ENCODE measurements at regions of chr21 and their contacts with region 1.

Region 1: DNA sequence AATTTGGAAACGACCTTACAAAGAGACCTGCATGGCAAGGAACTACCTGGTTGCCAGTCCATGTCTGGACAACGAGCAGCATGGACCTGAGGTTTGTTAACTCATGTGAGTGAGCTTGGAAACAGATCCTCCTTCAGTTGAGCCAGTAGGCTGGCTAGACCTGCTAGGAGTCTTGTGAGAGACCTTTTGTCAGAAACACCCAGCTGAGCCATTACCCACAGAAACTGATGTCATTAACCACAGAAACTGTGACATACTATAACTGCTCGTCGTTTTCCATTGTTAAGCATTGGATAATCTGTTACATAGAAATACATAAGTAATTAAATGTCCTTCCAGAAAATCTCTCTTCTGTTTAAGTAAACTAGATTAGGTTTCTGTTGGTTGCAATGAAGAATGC is 211.1 kb upstream of the C21orf91 start:
- DNase-seq: no peak
- ATAC-seq: no peak
- H3K4me3 ChIP-seq: no peak overlapping the region
- H3K4me3 Mint-ChIP-seq: no peak overlapping the region
- H3K27ac ChIP-seq: no peak overlapping the region
- H3K27ac Mint-ChIP-seq: no peak overlapping the region
- H3K4me1 ChIP-seq: no peaks in the 10 kb centered on the region
- H3K4me1 Mint-ChIP-seq: no peaks in the 10 kb centered on the region
- H3K27me3 ChIP-seq: no peaks in the 10 kb centered on the region
- H3K27me3 Mint-ChIP-seq: no peaks in the 10 kb centered on the region
- CTCF ChIP-seq: no peak

Region 2: GRCh38 chr21:17981060-17981740 is 49.0 kb before region 1 on chr21:
- CTCF ChIA-PET with region 1: no interaction called
- POLR2A ChIA-PET with region 1: no interaction called
- intact Hi-C with region 1: loop called in 1 of 2 experiments (anchors 5 kb)
- DNase-seq: no peak
- ATAC-seq: no peak
- H3K4me3 ChIP-seq: no peak overlapping the region
- H3K4me3 Mint-ChIP-seq: no peak overlapping the region
- H3K27ac ChIP-seq: no peak overlapping the region
- H3K27ac Mint-ChIP-seq: no peak overlapping the region
- H3K4me1 ChIP-seq: no peaks in the 10 kb centered on the region
- H3K4me1 Mint-ChIP-seq: no peaks in the 10 kb centered on the region
- H3K27me3 ChIP-seq: no peaks in the 10 kb centered on the region
- H3K27me3 Mint-ChIP-seq: no peaks in the 10 kb centered on the region
- CTCF ChIP-seq: no peak

Region 3: GRCh38 chr21:18772404-18772803 is 742.2 kb after region 1 on chr21:
- CTCF ChIA-PET with region 1: no interaction called
- POLR2A ChIA-PET with region 1: no interaction called
- intact Hi-C with region 1: loop called in 1 of 2 experiments (anchors 5 kb)
- DNase-seq: no peak
- ATAC-seq: no peak
- H3K4me3 ChIP-seq: no peak overlapping the region
- H3K4me3 Mint-ChIP-seq: no peak overlapping the region
- H3K27ac ChIP-seq: no peak overlapping the region
- H3K27ac Mint-ChIP-seq: no peak overlapping the region
- H3K4me1 ChIP-seq: no peaks in the 10 kb centered on the region
- H3K4me1 Mint-ChIP-seq: no peaks in the 10 kb centered on the region
- H3K27me3 ChIP-seq: no peaks in the 10 kb centered on the region
- H3K27me3 Mint-ChIP-seq: no peaks in the 10 kb centered on the region
- CTCF ChIP-seq: no peak